Panc1 (cell line): ENCODE measurements at regions of chr4 and their contacts with region 1.

Region 1: GRCh38 chr4:8468746-8469535 is 28.4 kb downstream of the TRMT44 start:
- DNase-seq: peak; percentile 48
- ATAC-seq: peak; percentile 87
- H3K4me3 ChIP-seq: no peak overlapping the region
- H3K27ac ChIP-seq: no peak overlapping the region
- H3K4me1 ChIP-seq: no peaks in the 10 kb centered on the region
- H3K27me3 ChIP-seq: no peaks in the 10 kb centered on the region
- CTCF ChIP-seq: peak; percentile 93

Region 2: DNA sequence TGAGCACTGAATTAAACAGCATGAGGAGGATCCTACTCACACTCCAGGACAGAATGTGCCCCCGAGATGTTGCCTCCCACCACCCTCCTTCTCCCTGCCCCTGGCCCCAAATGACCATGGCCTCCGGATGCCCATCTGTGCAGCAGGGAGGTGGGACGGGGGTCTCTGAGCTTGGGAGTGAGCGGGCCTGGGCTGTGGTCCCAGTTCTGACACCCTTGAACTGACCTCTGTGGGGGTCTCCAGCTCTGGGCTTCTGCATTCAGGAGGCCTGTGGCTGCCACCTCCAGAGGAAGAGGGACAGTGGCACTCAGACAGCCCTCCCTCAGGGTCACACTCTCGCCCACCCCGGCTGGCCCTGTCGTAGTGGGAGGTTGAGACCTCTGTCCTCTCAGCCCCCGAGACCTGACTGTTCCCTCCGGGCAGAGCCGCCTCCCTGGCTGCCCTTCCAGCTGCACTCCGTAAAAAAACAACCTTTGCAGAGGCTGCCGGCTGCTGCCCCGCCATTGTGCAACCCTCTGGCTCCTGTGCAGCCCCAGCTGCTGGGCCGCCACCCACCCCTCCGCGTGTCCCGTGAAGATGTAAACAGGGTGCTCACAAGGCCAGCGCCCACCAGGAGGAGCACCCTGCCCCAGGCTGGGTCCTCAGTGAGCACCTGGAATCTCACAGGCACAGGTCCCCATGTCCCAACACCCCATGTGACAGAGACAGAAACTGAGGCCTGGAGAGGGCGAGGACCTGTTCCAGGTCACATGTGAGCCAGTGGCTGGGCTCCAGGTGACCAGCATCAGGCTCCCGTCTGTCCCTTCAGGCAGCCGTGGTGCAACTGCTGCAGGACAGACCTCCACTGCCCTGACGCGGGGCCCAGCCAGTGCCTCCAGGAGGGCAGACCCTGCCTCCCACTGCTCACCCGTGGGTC is 159.8 kb before region 1 on chr4:
- CTCF ChIA-PET with region 1: no interaction called
- POLR2A ChIA-PET with region 1: no interaction called
- in situ Hi-C with region 1: no loop called
- intact Hi-C with region 1: no loop called
- DNase-seq: no peak
- ATAC-seq: no peak
- H3K4me3 ChIP-seq: no peak overlapping the region
- H3K27ac ChIP-seq: no peak overlapping the region
- H3K4me1 ChIP-seq: no peaks in the 10 kb centered on the region
- H3K27me3 ChIP-seq: no peaks in the 10 kb centered on the region
- CTCF ChIP-seq: no peak

Region 3: DNA sequence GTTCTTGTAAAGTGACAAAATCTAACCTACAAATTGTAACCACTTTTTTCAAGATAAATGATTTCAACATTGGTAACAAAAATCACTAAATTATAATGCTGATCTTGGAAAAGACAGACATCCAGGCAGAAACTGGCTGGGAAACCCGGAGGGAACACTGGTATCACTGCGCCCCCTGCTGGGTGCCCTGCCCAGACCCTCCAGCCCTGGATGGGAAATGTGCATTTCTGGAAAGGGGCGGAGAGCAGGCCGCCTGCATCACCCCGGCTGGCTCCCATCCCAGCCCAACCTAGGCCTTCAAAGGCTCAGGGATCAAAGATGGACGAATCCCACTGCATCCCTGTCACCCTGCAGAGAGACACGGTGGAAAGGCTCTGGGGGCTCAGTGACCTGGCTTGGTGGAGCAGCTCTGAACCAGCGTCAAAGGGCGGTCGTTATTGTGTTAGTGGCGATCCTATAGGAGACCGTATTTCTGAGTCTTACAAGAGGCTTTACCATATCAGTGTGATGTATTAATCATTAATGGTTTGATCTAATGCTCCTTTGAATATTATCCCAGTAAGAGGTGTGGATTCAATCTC is 65.7 kb before region 1 on chr4:
- CTCF ChIA-PET with region 1: no interaction called
- POLR2A ChIA-PET with region 1: no interaction called
- in situ Hi-C with region 1: no loop called
- intact Hi-C with region 1: no loop called
- DNase-seq: no peak
- ATAC-seq: peak; percentile 95
- H3K4me3 ChIP-seq: no peak overlapping the region
- H3K27ac ChIP-seq: no peak overlapping the region
- H3K4me1 ChIP-seq: no peaks in the 10 kb centered on the region
- H3K27me3 ChIP-seq: no peaks in the 10 kb centered on the region
- CTCF ChIP-seq: peak; percentile 89

Region 4: GRCh38 chr4:8547108-8547970 is 78.4 kb after region 1 on chr4:
- CTCF ChIA-PET with region 1: no interaction called
- POLR2A ChIA-PET with region 1: no interaction called
- in situ Hi-C with region 1: no loop called
- intact Hi-C with region 1: loop called (anchors 5 kb)
- DNase-seq: no peak
- ATAC-seq: peak; percentile 58; the same call in 1 of the 2 replicates
- H3K4me3 ChIP-seq: no peak overlapping the region
- H3K27ac ChIP-seq: no peak overlapping the region
- H3K4me1 ChIP-seq: no peaks in the 10 kb centered on the region
- H3K27me3 ChIP-seq: no peaks in the 10 kb centered on the region
- CTCF ChIP-seq: no peak; the same call in 1 of the 2 replicates

Region 5: DNA sequence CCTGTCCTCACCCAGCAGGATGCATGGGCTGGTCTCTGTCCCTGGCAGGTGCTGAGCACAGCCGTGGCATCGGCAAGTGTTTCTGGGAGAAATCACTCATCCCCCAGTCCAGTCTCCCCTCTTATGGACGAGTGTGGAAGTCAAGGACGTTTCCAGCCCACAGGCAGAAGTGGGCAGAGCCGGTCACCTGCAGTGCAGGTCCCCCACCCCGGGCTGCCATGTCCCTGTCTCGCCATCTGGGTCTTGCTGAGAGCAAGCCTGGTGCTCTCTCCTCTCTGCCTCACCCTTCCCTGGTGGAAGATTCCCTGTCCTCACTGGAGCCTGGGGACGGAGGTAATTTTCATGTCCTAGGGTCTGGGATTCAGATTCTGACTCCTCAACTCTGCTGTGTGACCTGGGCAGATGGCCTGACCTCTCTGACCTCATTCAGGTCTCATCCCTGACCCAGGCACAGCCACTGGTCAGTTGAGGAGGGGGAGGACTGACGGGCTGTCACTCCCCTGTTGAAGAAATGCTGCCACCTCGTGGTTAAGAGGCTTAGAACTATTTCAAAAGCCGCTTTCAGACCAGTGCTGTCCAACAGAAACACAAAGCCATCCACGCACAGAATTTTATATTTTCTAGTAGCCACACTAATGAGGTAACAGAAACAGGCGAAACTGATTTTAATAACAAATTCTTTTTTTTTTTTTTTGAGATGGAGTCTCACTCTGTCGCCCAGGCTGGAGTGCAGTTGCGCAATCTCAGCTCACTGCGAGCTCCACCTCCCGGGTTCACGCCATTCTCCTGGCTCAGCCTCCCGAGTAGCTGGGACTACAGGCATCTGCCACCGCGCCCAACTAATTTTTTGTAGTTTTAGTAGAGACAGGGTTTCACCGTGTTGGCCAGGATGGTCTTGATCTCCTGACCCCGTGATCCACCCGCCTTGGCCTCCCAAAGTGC is 125.4 kb after region 1 on chr4:
- CTCF ChIA-PET with region 1: interaction called, 3 read pairs
- POLR2A ChIA-PET with region 1: no interaction called
- in situ Hi-C with region 1: no loop called
- intact Hi-C with region 1: loop called (anchors 2 kb)
- DNase-seq: peak; percentile 33
- ATAC-seq: peak; percentile 80
- H3K4me3 ChIP-seq: no peak overlapping the region
- H3K27ac ChIP-seq: no peak overlapping the region
- H3K4me1 ChIP-seq: no peaks in the 10 kb centered on the region
- H3K27me3 ChIP-seq: no peaks in the 10 kb centered on the region
- CTCF ChIP-seq: peak; percentile 82

Region 6: GRCh38 chr4:8761167-8761823 is 292.4 kb after region 1 on chr4:
- CTCF ChIA-PET with region 1: no interaction called
- POLR2A ChIA-PET with region 1: no interaction called
- in situ Hi-C with region 1: no loop called
- intact Hi-C with region 1: no loop called
- DNase-seq: no peak
- ATAC-seq: peak; percentile 56
- H3K4me3 ChIP-seq: no peak overlapping the region
- H3K27ac ChIP-seq: no peak overlapping the region
- H3K4me1 ChIP-seq: no peaks in the 10 kb centered on the region
- H3K27me3 ChIP-seq: no peaks in the 10 kb centered on the region
- CTCF ChIP-seq: no peak